IMR-90 (cell line): ENCODE measurements at regions of chr7 and their contacts with region 1.

Region 1: DNA sequence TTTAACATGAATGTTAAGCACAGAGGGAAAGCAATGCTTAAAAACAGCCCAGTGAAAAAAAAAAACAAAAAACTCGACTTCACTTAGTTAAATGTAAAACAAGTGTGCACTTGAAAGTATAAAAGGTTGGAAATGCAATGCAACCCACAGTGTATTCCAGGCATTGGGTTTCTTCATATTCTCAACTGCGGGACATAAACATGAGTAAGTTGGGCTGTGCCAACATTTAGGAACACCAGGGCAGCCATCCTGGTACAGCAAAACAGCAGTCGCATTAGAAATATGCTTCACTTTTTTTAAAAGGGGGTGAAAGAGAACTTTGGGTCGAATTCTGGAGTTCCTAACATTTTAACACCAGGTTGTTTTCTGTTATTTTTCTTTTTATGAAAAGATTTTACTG is 937 bp downstream of the STEAP1 start:
- DNase-seq: no peak
- ATAC-seq: no peak
- H3K4me3 ChIP-seq: no peak overlapping the region
- H3K27ac ChIP-seq: no peak overlapping the region
- H3K4me1 ChIP-seq: no peaks in the 10 kb centered on the region
- H3K27me3 ChIP-seq: no peaks in the 10 kb centered on the region
- CTCF ChIP-seq: no peak
- POLR2A ChIP-seq: no peak
- RAD21 ChIP-seq: no peak

Region 2: DNA sequence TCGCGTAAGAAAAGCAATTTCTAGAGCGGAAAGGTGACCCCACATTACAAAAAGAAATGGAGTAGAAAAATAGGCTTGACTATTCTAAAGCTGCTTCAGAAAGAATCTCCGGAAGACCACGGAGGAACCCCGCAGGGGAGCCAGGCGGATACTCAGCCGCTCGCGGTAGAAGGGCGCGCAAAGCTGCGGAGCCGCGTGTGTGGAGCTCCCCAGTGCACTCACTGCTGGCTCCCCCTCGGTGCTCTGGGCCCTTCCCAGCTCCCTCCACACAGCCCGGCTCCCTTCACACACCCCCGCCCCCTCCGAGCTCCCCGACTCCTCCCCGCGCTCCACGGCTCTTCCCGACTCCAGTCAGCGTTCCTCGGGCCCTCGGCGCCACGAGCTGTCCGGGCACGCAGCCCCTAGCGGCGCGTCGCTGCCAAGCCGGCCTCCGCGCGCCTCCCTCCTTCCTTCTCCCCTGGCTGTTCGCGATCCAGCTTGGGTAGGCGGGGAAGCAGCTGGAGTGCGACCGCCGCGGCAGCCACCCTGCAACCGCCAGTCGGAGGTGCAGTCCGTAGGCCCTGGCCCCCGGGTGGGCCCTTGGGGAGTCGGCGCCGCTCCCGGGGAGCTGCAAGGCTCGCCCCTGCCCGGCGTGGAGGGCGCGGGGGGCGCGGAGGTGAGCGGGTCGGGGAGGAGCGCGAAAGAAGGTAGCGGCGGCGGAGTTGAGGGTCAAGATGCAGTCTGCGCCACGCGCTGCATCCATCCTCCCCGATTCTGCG is 56.4 kb after region 1 on chr7 and contains the start of gene STEAP2:
- CTCF ChIA-PET with region 1: interaction called, 3 read pairs
- POLR2A ChIA-PET with region 1: no interaction called
- dilution Hi-C with region 1: no loop called
- in situ Hi-C with region 1: no loop called
- intact Hi-C with region 1: loop called (anchors 2 kb)
- DNase-seq: peak; percentile 85
- ATAC-seq: peak; percentile 99
- H3K4me3 ChIP-seq: peak within 1 kb of the TSS; percentile 56
- H3K27ac ChIP-seq: peak within 1 kb of the TSS; percentile 48
- H3K4me1 ChIP-seq: no peaks in the 10 kb centered on the region
- H3K27me3 ChIP-seq: no peaks in the 10 kb centered on the region
- CTCF ChIP-seq: peak; percentile 61
- POLR2A ChIP-seq: no peak
- RAD21 ChIP-seq: peak; percentile 49
- total RNA-seq, gene STEAP2: 3.9 and 4.2 TPM in 2 replicates

Region 3: DNA sequence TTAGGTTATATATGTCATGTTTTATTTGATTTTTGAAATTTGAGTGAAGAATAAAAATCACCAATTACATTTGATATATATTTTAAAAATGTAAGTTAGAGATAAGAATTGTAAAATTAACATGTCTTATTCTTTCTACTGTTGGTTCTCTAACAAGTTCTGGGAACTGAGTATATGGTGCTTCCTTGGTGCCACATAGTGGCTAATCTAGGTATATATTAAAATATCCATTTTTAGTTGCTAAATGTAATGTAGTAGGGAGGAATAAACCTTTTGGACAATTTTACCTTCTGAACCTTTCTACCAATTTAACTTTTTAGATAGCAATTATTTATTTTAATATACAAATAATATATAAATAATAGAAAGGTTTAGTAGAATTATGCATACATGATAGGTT is 107.2 kb after region 1 on chr7:
- CTCF ChIA-PET with region 1: interaction called, 4 read pairs
- POLR2A ChIA-PET with region 1: no interaction called
- dilution Hi-C with region 1: no loop called
- in situ Hi-C with region 1: loop called (anchors 10 kb)
- intact Hi-C with region 1: loop called (anchors 1 kb)
- DNase-seq: peak; percentile 35
- ATAC-seq: peak; percentile 82
- H3K4me3 ChIP-seq: no peak overlapping the region
- H3K27ac ChIP-seq: no peak overlapping the region
- H3K4me1 ChIP-seq: no peaks in the 10 kb centered on the region
- H3K27me3 ChIP-seq: no peaks in the 10 kb centered on the region; the same call in 1 of the 2 replicates
- CTCF ChIP-seq: peak; percentile 57
- POLR2A ChIP-seq: no peak
- RAD21 ChIP-seq: peak; percentile 67

Region 4: DNA sequence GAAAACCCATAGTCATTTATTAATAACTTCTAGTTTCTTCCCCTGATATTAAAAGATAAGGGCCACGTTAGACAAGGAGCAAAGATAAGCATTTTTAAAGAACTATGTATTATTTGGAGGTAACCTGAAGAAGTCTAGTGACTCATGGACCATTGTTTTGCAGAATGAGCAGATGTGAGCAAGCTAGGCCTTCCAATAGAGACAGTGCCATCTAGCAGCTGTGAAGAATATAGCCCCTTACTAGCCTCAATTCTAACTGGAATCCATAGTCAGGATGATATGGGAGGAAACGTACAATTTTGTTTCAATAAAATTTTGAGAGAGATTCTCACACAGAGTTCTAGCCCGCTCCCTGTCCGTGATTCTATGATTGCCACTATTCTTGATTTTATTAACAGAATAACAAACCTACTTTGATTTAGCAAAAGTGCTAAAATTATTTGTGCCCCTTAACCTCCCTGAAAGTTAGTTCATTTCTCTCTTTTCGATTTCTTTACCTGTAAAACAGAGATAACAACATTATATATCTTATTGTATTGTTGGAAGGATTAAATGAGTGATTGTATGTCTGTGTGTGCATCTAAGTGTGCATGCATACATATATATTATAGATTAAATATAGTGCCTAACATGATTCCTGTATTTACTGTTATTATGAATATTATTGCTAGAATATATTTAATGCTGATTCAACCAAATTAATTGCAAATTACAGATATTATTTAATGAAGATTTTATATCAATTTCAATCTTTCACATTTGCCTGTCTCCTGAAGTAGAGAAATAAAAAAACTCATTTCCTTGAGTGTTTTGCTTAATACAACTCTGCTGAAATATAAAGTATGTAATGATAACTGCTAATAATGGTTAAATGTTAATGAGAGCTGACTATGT is 143.2 kb after region 1 on chr7:
- CTCF ChIA-PET with region 1: interaction called, 5 read pairs
- POLR2A ChIA-PET with region 1: no interaction called
- dilution Hi-C with region 1: no loop called
- in situ Hi-C with region 1: no loop called
- intact Hi-C with region 1: loop called (anchors 1 kb)
- DNase-seq: peak; percentile 75
- ATAC-seq: peak; percentile 96
- H3K4me3 ChIP-seq: no peak overlapping the region
- H3K27ac ChIP-seq: no peak overlapping the region
- H3K4me1 ChIP-seq: no peaks in the 10 kb centered on the region
- H3K27me3 ChIP-seq: no peaks in the 10 kb centered on the region
- CTCF ChIP-seq: peak; percentile 67
- POLR2A ChIP-seq: no peak
- RAD21 ChIP-seq: peak; percentile 65

Region 5: GRCh38 chr7:90424720-90425119 is 269.5 kb after region 1 on chr7:
- CTCF ChIA-PET with region 1: interaction called, 11 read pairs
- POLR2A ChIA-PET with region 1: no interaction called
- dilution Hi-C with region 1: no loop called
- in situ Hi-C with region 1: no loop called
- intact Hi-C with region 1: loop called (anchors 1 kb)
- DNase-seq: no peak
- ATAC-seq: no peak
- H3K4me3 ChIP-seq: no peak overlapping the region
- H3K27ac ChIP-seq: no peak overlapping the region
- H3K4me1 ChIP-seq: no peaks in the 10 kb centered on the region
- H3K27me3 ChIP-seq: no peaks in the 10 kb centered on the region
- CTCF ChIP-seq: no peak
- POLR2A ChIP-seq: no peak
- RAD21 ChIP-seq: no peak